Activated CD4-positive, alpha-beta T cell treated with anti-CD3 and anti-CD28 coated beads for 36 hours (primary cell): ENCODE measurements at regions of chr5 and their contacts with region 1.

Region 1: GRCh38 chr5:75717082-75717922 is at the start of gene POC5:
- DNase-seq: peak; percentile 99
- ATAC-seq: peak; percentile 94
- H3K4me3 Mint-ChIP-seq: peak within 1 kb of the TSS; percentile 97
- H3K27ac Mint-ChIP-seq: peak within 1 kb of the TSS; percentile 99
- H3K4me1 Mint-ChIP-seq: peaks cover 32% of the 10 kb centered on the region
- H3K27me3 Mint-ChIP-seq: no peaks in the 10 kb centered on the region
- total RNA-seq, gene POC5: 20.2 to 20.3 TPM

Region 2: GRCh38 chr5:74684900-74685851 is 1032.1 kb before region 1 on chr5 and contains the start of gene HEXB:
- CTCF ChIA-PET with region 1: no interaction called
- POLR2A ChIA-PET with region 1: no interaction called
- intact Hi-C with region 1: loop called in 1 of 2 experiments (anchors 1 kb)
- DNase-seq: peak; percentile 94
- ATAC-seq: peak; percentile 98
- H3K4me3 Mint-ChIP-seq: peak within 1 kb of the TSS; percentile 73
- H3K27ac Mint-ChIP-seq: peak within 1 kb of the TSS; percentile 87
- H3K4me1 Mint-ChIP-seq: peaks cover 21% of the 10 kb centered on the region
- H3K27me3 Mint-ChIP-seq: no peaks in the 10 kb centered on the region
- total RNA-seq, gene HEXB: 42.6 to 47.6 TPM

Region 3: DNA sequence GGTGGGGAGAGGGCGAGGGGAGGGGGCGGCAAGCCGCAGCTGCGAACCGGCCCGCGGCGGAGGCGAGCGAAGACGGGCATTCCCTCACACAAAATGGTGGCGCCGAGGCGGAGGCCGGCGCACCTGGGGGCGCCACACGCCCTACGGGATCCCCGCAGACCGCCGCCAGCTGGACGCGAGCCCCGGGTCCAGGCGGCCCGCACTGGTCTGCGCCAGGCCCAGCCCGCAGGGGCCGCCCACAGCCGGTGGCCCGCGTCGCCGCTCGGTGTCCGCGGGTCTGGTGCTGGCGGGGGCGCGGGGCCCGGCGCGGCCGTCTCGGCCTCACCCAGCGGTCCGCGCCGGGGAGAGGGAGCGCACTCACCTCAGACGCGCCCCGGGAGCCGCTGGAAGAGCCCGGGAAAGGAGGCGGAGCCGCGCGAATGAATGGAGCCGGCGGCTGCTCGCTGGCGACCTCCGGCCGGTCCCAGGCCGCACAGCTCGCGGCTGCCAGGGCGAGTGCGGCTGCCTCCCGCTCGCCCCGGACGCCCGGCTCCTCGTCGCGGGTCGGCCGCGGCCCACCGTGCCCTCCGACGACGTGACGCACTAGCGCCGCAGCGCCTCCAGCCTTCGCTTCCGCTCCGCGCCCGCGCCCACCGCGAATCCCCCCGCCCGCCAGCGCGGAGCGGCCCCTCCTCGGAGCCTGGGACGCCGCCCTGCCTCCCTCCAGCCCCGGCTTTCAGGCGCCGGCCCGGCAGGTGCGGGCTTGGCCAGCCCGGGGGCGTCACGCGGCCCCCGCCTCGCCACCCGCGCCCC is 851.3 kb before region 1 on chr5 and contains the start of gene FAM169A:
- CTCF ChIA-PET with region 1: no interaction called
- POLR2A ChIA-PET with region 1: no interaction called
- intact Hi-C with region 1: loop called in 1 of 2 experiments (anchors 1 kb)
- DNase-seq: peak; percentile 65
- ATAC-seq: peak; percentile 69
- H3K4me3 Mint-ChIP-seq: peak within 1 kb of the TSS; percentile 92
- H3K27ac Mint-ChIP-seq: peak within 1 kb of the TSS; percentile 95
- H3K4me1 Mint-ChIP-seq: peaks cover 29% of the 10 kb centered on the region
- H3K27me3 Mint-ChIP-seq: peaks cover 2% of the 10 kb centered on the region
- total RNA-seq, gene FAM169A: 6.1 to 9.1 TPM

Region 4: GRCh38 chr5:75336625-75337339 is 380.5 kb before region 1 on chr5 and contains the start of gene HMGCR:
- CTCF ChIA-PET with region 1: no interaction called
- POLR2A ChIA-PET with region 1: no interaction called
- intact Hi-C with region 1: loop called (anchors 1 kb)
- DNase-seq: peak; percentile 99
- ATAC-seq: peak; percentile 96
- H3K4me3 Mint-ChIP-seq: no peak within 1 kb of the TSS
- H3K27ac Mint-ChIP-seq: no peak within 1 kb of the TSS
- H3K4me1 Mint-ChIP-seq: peaks cover 31% of the 10 kb centered on the region
- H3K27me3 Mint-ChIP-seq: no peaks in the 10 kb centered on the region
- total RNA-seq, gene HMGCR: 36.1 to 51.1 TPM

Region 5: DNA sequence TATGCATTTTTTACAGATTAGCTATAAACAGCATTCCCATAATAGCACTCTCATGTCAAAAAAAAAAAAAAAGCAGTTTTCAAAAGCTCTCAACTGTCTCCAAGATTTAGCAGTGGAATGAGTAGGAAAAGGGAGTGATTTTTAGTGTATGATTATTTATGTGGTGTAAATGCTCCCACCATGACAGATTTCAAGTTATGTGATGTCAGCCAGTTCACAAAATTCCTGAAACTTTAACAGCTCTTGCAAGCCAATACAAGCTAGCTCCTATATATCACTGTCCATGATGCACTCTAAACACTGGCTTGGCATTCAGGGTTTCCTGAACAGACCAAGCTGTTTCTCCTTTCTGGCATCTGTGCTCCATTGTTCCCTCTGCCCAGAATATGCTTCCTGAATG is 113.9 kb before region 1 on chr5:
- CTCF ChIA-PET with region 1: no interaction called
- POLR2A ChIA-PET with region 1: no interaction called
- intact Hi-C with region 1: no loop called
- DNase-seq: no peak
- ATAC-seq: no peak
- H3K4me3 Mint-ChIP-seq: no peak overlapping the region
- H3K27ac Mint-ChIP-seq: no peak overlapping the region
- H3K4me1 Mint-ChIP-seq: peaks cover 9% of the 10 kb centered on the region
- H3K27me3 Mint-ChIP-seq: no peaks in the 10 kb centered on the region

Region 6: GRCh38 chr5:75640395-75640794 is 76.9 kb before region 1 on chr5:
- CTCF ChIA-PET with region 1: no interaction called
- POLR2A ChIA-PET with region 1: no interaction called
- intact Hi-C with region 1: no loop called
- DNase-seq: no peak
- ATAC-seq: no peak
- H3K4me3 Mint-ChIP-seq: no peak overlapping the region
- H3K27ac Mint-ChIP-seq: no peak overlapping the region
- H3K4me1 Mint-ChIP-seq: no peaks in the 10 kb centered on the region
- H3K27me3 Mint-ChIP-seq: peaks cover 3% of the 10 kb centered on the region

Region 7: DNA sequence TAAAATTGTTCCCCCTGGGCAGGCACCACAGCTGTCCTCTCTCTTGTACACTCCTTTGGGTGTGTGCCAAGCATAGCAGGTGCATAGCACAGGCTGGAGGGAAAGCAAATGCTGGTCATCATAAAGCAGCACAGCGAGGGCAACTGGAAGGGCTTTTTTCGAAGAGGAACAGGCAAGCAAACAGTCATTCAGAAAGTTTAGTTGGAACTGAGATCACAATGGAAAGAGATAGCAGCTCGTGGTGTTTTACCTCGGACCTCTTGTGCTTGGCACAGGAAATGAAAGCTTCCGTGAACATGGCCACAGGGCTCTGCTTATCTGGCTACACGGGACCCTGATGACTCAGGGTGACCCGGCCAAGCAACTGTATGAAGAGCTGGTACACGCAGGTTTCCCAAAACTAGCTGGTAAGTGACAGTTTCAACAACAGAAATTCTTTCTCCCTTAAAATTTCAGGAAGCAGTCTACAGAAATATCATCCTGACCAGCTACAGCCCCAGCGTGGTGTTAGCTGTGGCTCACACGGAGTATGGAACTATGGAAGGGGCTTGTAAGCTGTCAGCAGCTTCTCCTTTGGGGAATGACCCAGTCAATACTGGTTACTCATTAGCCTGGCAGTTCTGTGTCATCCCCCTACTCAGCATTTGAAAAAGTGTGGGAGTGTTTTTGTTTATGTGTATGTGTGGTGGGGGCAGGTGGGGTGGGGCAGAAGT is 48.2 kb before region 1 on chr5:
- CTCF ChIA-PET with region 1: no interaction called
- POLR2A ChIA-PET with region 1: interaction called, 4 read pairs
- intact Hi-C with region 1: loop called in 1 of 2 experiments (anchors 1 kb)
- DNase-seq: peak; percentile 82
- ATAC-seq: peak; percentile 97
- H3K4me3 Mint-ChIP-seq: peak overlapping the region; percentile 67
- H3K27ac Mint-ChIP-seq: peak overlapping the region; percentile 91
- H3K4me1 Mint-ChIP-seq: peaks cover 37% of the 10 kb centered on the region
- H3K27me3 Mint-ChIP-seq: no peaks in the 10 kb centered on the region

Region 8: GRCh38 chr5:76269932-76270610 is 552.8 kb after region 1 on chr5:
- CTCF ChIA-PET with region 1: no interaction called
- POLR2A ChIA-PET with region 1: no interaction called
- intact Hi-C with region 1: loop called in 1 of 2 experiments (anchors 2 kb)
- DNase-seq: peak; percentile 67
- ATAC-seq: peak; percentile 78
- H3K4me3 Mint-ChIP-seq: peak overlapping the region; percentile 52
- H3K27ac Mint-ChIP-seq: peak overlapping the region; percentile 96
- H3K4me1 Mint-ChIP-seq: peaks cover 40% of the 10 kb centered on the region
- H3K27me3 Mint-ChIP-seq: peaks cover 7% of the 10 kb centered on the region